ENCODE measurements at regions of chr9 and their contacts with region 1.

Region 1: DNA sequence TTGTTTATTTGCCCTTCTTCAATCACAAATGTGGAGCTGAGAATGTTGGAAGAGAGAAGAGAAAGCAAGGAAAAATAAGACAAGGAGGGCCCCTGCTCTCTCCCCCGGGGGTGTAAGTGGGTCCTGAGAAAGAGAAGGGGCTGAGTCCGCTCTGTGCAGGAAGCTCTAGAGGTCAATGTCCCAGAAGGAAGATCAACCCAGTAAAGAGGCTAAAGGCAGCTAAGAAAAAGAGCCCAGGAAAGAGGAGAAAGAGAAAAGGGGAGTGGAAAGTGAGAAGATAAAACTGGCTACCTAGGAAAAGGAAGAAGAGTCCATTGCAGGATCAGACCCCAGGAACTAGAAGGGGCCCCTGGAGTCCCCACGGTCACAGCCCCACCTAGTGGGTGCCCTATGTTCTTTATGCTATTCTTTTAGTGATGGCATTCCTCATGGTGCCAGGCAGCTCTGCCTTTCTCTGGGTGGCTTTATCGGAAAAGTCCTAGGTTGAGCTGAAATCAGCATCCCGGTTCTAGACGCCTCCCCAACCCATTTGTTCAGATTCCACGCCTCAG is 583.4 kb downstream of the ACTL7B start:
- ATAC-seq: peak; percentile 42 to 71 (median 56)
- H3K4me3 ChIP-seq: no peak overlapping the region
- H3K27ac ChIP-seq: peak overlapping the region in 1 of 2 donors; percentile 32
- H3K4me1 ChIP-seq: peaks cover 12 to 31% of the 10 kb centered on the region in 2 donors

Region 2: GRCh38 chr9:107465467-107466451 is 806.7 kb before region 1 on chr9:
- in situ Hi-C with region 1: loop called in 1 of 9 experiments (anchors 25 kb)
- ATAC-seq: peak; percentile 97 to 99 (median 99)
- H3K4me3 ChIP-seq: peak overlapping the region; percentile 49 to 56 (median 53)
- H3K27ac ChIP-seq: no peak overlapping the region
- H3K4me1 ChIP-seq: no peaks in the 10 kb centered on the region

Region 3: DNA sequence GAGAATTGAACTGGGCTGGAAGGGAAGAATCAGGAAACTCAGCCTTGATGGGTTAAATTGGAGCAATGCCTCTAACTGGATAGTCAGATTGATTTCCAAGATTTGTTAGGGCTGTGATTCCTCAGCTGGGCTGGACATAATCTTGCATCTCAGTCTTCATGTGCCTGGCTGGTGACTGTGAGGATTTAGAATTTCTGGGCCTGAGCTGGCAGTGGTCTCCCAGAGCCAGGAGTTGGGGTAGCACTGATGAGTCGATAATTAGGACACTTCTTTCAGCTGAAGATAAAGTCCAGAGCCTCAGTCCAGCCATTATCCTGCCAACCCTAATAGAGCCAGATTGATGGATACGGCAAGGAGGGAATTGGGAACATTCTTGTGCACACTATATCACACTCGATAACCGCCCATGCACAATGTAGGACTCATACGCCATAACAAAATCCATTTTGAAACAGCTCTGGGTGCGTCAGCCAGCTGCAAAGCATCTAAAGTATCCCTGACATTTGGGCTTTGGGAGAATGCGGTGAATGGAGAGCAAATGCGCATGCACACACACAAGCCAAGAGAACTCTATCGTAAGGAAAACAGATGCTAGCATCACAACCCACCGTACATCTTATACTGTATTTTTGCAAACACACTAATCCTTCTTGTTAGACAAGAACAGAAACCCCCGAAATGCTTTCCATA is 377.7 kb before region 1 on chr9:
- in situ Hi-C with region 1: no loop called
- ATAC-seq: peak in 3 of 8 experiments; percentile 63 to 93 (median 89)
- H3K4me3 ChIP-seq: no peak overlapping the region
- H3K27ac ChIP-seq: no peak overlapping the region
- H3K4me1 ChIP-seq: no peaks in the 10 kb centered on the region

Measured in motor neuron (in vitro differentiated cells).